Mucosa of descending colon (tissue), 3 donors: ENCODE measurements at regions of chr18 and their contacts with region 1.

Region 1: DNA sequence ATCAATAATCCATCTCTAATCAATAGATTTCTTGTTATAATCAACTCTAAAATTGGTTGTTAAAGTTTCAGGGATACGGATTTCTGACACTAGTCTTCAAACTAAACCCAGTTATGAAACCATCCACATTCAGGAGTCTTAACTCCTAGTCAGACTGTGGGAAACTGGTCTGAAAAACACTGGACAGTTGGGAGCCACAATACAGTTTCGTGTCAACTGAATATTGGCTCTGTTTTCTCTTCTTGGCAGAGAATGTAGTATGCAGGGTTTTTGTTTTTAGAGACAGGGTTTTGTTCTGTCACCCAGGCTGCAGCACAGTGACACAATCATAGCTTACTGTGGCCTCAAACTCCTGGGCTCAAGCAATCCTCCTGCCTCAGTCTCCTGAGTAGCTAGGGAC is 123.1 kb downstream of the RTTN start:
- DNase-seq: no peak
- ATAC-seq: no peak
- H3K4me3 ChIP-seq: no peak overlapping the region
- H3K4me1 ChIP-seq: no peaks in the 10 kb centered on the region
- CTCF ChIP-seq: no peak

Region 2: GRCh38 chr18:68847219-68847837 is 1235.1 kb before region 1 on chr18:
- intact Hi-C with region 1: loop called (anchors 10 kb)
- DNase-seq: no peak
- ATAC-seq: no peak
- H3K4me3 ChIP-seq: no peak overlapping the region
- H3K4me1 ChIP-seq: no peaks in the 10 kb centered on the region
- CTCF ChIP-seq: no peak

Region 3: GRCh38 chr18:68854786-68855391 is 1227.5 kb before region 1 on chr18:
- intact Hi-C with region 1: loop called in 1 of 2 experiments (anchors 10 kb)
- DNase-seq: no peak
- ATAC-seq: no peak
- H3K4me3 ChIP-seq: no peak overlapping the region
- H3K4me1 ChIP-seq: no peaks in the 10 kb centered on the region
- CTCF ChIP-seq: no peak